Activated CD8-positive, alpha-beta memory T cell treated with anti-CD3 and anti-CD28 coated beads, Interleukin-2, amount 10 ng/mL, durations not matched to agents 7 days and 5 days (primary cell): ENCODE measurements at regions of chr16 and their contacts with region 1.

Region 1: DNA sequence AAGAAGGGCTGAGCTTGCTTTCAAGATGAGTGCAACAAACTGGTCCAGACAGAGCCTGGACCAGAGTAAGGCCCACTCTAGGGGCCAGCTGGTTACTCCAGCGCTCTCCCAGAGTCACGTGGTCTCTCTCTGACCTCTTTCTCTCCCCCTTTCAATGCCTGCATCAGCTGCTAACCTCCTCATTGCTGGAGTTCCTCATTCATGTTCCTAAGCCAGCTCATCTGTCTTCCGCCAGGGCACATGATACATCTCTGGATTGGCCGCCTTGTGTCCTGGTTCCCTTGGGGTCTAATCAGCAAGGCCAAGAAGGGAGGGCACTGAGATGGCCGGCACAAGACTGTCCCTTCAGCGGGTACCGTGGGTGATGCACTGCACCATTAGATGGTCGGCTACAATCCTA is 26.9 kb upstream of the ZFP90 start:
- DNase-seq: no peak
- ATAC-seq: no peak
- H3K4me3 Mint-ChIP-seq: no peak overlapping the region
- H3K27ac Mint-ChIP-seq: no peak overlapping the region
- H3K4me1 Mint-ChIP-seq: peaks cover 10% of the 10 kb centered on the region
- H3K27me3 Mint-ChIP-seq: peaks cover 19% of the 10 kb centered on the region

Region 2: GRCh38 chr16:68367030-68367429 is 145.2 kb before region 1 on chr16:
- CTCF ChIA-PET with region 1: interaction called, 29 read pairs
- DNase-seq: peak; percentile 66
- ATAC-seq: peak; percentile 41
- H3K4me3 Mint-ChIP-seq: no peak overlapping the region
- H3K27ac Mint-ChIP-seq: no peak overlapping the region
- H3K4me1 Mint-ChIP-seq: peaks cover 42% of the 10 kb centered on the region
- H3K27me3 Mint-ChIP-seq: peaks cover 23% of the 10 kb centered on the region

Region 3: GRCh38 chr16:68406451-68407152 is 105.6 kb before region 1 on chr16:
- CTCF ChIA-PET with region 1: interaction called, 13 read pairs
- DNase-seq: no peak
- ATAC-seq: no peak
- H3K4me3 Mint-ChIP-seq: no peak overlapping the region
- H3K27ac Mint-ChIP-seq: no peak overlapping the region
- H3K4me1 Mint-ChIP-seq: peaks cover 17% of the 10 kb centered on the region
- H3K27me3 Mint-ChIP-seq: peaks cover 30% of the 10 kb centered on the region

Region 4: DNA sequence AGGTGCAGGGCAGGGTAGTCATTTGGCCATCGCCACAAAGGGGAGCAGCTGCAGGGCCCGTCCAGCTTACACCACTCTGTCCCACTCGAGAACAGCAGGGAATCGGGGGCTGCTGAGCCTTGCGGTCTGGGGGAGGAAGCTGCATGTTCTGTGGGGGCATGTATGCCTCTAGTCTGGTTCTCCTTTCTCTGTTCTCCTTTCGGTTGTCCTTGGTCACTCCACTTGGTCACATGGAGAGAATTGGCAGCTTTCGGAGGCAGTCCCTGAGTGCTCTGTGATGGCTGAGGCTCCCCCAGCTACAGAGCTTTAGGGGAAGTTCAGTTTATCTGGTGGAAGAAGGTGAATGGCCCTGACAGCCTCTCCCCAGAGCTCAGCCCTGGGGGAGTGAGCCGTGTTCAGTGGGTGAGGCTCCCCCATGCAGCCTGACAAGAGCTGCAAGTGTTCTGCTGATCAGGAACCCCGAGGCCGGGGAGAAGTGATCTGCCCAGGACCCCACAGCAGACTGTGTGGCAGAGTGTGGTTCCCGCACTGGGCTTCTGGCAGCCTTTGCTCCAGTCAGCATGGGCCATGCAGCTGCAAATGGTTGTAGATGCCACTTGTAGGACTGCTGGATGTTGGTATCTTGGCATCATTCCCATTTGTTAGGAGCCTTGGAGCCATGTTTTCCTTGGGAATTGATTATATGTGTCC is 41.6 kb before region 1 on chr16:
- CTCF ChIA-PET with region 1: interaction called, 24 read pairs
- DNase-seq: peak; percentile 45
- ATAC-seq: peak; percentile 60
- H3K4me3 Mint-ChIP-seq: peak overlapping the region; percentile 70
- H3K27ac Mint-ChIP-seq: peak overlapping the region; percentile 86
- H3K4me1 Mint-ChIP-seq: peaks cover 34% of the 10 kb centered on the region
- H3K27me3 Mint-ChIP-seq: no peaks in the 10 kb centered on the region

Region 5: GRCh38 chr16:68528686-68529379 is 16.6 kb after region 1 on chr16:
- CTCF ChIA-PET with region 1: interaction called, 14 read pairs
- DNase-seq: peak; percentile 91
- ATAC-seq: peak; percentile 82
- H3K4me3 Mint-ChIP-seq: peak overlapping the region; percentile 77
- H3K27ac Mint-ChIP-seq: no peak overlapping the region
- H3K4me1 Mint-ChIP-seq: peaks cover 22% of the 10 kb centered on the region
- H3K27me3 Mint-ChIP-seq: no peaks in the 10 kb centered on the region

Region 6: DNA sequence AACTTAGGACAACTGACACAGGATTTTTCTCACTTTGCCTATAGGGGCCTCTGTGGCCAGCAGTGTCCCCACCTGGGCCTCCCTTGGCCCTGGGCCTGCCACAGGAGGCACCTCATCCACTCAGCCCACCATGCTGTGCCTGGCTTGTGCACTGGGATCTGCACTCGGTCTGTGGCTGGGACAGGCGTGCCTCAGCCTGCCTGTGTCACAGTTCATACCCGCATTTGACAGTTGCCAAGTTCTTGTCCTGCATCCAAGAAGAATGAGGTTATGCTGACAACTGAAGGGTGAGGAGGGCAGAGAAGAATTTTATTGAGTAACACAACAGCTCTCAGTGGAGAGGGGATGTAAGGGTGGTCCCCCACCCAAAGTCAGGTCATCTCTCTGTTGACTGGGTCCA is 62.9 kb after region 1 on chr16:
- CTCF ChIA-PET with region 1: no interaction called
- DNase-seq: no peak
- ATAC-seq: no peak
- H3K4me3 Mint-ChIP-seq: no peak overlapping the region
- H3K27ac Mint-ChIP-seq: no peak overlapping the region
- H3K4me1 Mint-ChIP-seq: no peaks in the 10 kb centered on the region
- H3K27me3 Mint-ChIP-seq: no peaks in the 10 kb centered on the region